CD4-positive, alpha-beta memory T cell (primary cell): ENCODE measurements at regions of chr10 and their contacts with region 1.

Region 1: DNA sequence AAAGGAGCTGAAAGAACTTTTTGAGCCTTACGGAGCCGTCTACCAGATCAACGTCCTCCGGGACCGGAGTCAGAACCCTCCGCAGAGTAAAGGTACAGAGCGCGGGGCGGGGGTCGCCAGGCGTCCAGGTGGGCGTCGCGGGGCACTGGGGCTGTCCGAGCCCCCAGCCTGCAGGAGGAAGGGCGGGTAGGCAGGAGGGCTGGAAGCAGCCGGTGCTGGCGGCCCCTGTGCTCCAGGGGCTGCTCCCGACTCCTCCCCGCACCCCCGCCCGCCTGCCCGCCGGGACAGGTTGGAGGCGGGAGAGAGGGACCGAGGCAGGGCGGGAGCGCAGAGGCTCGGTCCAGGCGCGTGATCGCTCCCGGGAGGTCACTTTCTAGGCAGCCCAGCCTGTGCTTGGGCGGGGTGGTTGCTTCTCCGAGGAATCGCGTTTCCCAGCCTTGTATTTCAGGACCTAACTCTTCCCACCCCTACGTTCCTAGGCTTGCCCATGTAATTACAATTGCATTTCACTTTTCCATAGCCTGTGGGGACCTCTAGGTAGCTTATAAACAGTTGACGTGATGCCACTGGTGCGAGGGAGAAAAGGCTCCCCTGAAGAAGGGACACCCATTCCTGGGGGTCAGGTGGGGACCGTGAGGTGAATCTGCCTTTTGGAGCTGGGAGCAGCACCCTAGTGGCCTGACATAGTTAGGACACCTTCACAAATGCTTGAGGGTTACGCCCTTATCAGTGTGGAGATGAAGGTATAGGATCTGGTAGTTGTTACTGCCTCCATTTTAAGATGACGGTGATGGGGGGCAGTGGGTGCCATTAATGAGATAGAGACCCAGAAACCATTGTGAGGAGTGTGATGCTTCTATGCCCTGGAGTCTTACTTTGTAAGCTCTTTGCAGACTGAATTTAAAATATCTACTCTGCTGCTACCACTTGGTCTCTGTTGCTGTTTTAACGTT is 148.2 kb downstream of the CELF2 start:
- DNase-seq: peak; percentile 78 to 91 (median 86)
- H3K4me3 ChIP-seq: peak overlapping the region; percentile 50 to 93
- H3K4me3 Mint-ChIP-seq: peak overlapping the region in 6 of 8 donors; percentile 98 to 100 (median 99)
- H3K27ac ChIP-seq: peak overlapping the region; percentile 96
- H3K27ac Mint-ChIP-seq: peak overlapping the region in 6 of 7 donors; percentile 97 to 99 (median 98)
- H3K4me1 ChIP-seq: peaks cover 65% of the 10 kb centered on the region
- H3K4me1 Mint-ChIP-seq: peaks cover 31 to 43% (median 35%) of the 10 kb centered on the region in 4 donors
- H3K27me3 ChIP-seq: no peaks in the 10 kb centered on the region
- H3K27me3 Mint-ChIP-seq: no peaks in the 10 kb centered on the region

Region 2: GRCh38 chr10:11106621-11107374 is 59.1 kb before region 1 on chr10:
- CTCF ChIA-PET with region 1: interaction called, 39 read pairs
- POLR2A ChIA-PET with region 1: interaction called, 88 read pairs
- intact Hi-C with region 1: no loop called
- DNase-seq: no peak
- H3K4me3 ChIP-seq: no peak overlapping the region
- H3K4me3 Mint-ChIP-seq: no peak overlapping the region
- H3K27ac ChIP-seq: no peak overlapping the region
- H3K27ac Mint-ChIP-seq: peak overlapping the region in 1 of 7 donors; percentile 45
- H3K4me1 ChIP-seq: peaks cover 15% of the 10 kb centered on the region
- H3K4me1 Mint-ChIP-seq: peaks cover 16 to 23% (median 17%) of the 10 kb centered on the region in 4 donors
- H3K27me3 ChIP-seq: no peaks in the 10 kb centered on the region
- H3K27me3 Mint-ChIP-seq: no peaks in the 10 kb centered on the region

Region 3: GRCh38 chr10:11118686-11119085 is 47.2 kb before region 1 on chr10:
- CTCF ChIA-PET with region 1: interaction called, 39 read pairs
- POLR2A ChIA-PET with region 1: interaction called, 88 read pairs
- intact Hi-C with region 1: loop called (anchors 1 kb)
- DNase-seq: no peak
- H3K4me3 ChIP-seq: no peak overlapping the region
- H3K4me3 Mint-ChIP-seq: no peak overlapping the region
- H3K27ac ChIP-seq: no peak overlapping the region
- H3K27ac Mint-ChIP-seq: no peak overlapping the region
- H3K4me1 ChIP-seq: peaks cover 5% of the 10 kb centered on the region
- H3K4me1 Mint-ChIP-seq: peaks cover 13 to 27% (median 16%) of the 10 kb centered on the region in 4 donors
- H3K27me3 ChIP-seq: no peaks in the 10 kb centered on the region
- H3K27me3 Mint-ChIP-seq: no peaks in the 10 kb centered on the region

Region 4: DNA sequence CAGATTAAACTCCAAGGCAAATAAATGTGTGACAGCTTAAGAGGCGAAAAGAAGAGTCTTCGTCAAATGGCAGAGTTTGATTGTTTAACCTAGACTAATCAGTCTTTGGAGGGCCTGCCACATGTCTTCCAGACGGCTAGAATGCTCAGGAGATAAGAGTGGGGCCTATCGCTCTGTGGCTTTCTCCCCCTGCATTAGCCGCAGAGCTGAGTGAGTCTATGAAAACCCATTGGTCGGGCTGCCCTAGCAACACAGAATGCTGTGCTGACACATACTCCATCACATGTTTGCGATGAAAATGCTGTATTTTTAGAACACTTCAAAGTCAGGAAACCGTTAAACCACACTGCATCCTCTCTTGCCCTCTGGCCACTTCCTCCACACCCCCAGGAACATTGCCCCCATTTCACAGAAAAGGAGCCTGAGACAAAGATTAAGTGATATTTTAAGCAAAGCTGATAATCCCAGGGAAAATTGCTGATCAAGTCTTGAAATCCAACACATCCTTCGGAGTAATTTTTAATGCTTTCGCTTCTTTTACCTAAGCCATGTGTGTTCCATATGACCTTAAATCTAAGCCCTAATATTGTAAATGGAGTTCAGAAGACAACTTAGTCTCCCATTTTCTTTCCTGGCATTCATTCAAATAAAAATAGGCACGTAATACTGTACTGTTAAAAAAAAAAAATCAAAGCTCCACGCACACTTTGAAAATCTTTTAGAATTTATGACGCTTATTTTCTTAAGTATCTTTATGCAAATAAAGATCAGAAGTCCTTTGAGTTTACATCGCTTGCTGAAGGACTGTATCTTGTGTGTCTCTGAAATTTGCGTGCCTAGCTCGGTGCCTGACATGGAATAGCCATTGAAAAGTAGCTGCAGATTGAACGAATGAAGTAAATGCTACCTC is 13.0 kb after region 1 on chr10:
- CTCF ChIA-PET with region 1: interaction called, 101 read pairs
- POLR2A ChIA-PET with region 1: interaction called, 478 read pairs
- intact Hi-C with region 1: loop called (anchors 1 kb)
- DNase-seq: peak; percentile 87 to 98 (median 89)
- H3K4me3 ChIP-seq: peak overlapping the region; percentile 13 to 20
- H3K4me3 Mint-ChIP-seq: peak overlapping the region in 2 of 8 donors; percentile 76 to 80
- H3K27ac ChIP-seq: peak overlapping the region; percentile 96
- H3K27ac Mint-ChIP-seq: peak overlapping the region in 3 of 7 donors; percentile 97 to 100 (median 98)
- H3K4me1 ChIP-seq: peaks cover 100% of the 10 kb centered on the region
- H3K4me1 Mint-ChIP-seq: peaks cover 30 to 90% (median 60%) of the 10 kb centered on the region in 4 donors
- H3K27me3 ChIP-seq: no peaks in the 10 kb centered on the region
- H3K27me3 Mint-ChIP-seq: no peaks in the 10 kb centered on the region

Region 5: GRCh38 chr10:11225935-11226334 is 60.1 kb after region 1 on chr10:
- CTCF ChIA-PET with region 1: interaction called, 9 read pairs
- POLR2A ChIA-PET with region 1: interaction called, 119 read pairs
- intact Hi-C with region 1: loop called (anchors 2 kb)
- DNase-seq: peak; percentile 46 to 86 (median 50)
- H3K4me3 ChIP-seq: peak overlapping the region in 1 of 2 donors; percentile 36
- H3K4me3 Mint-ChIP-seq: peak overlapping the region in 7 of 8 donors; percentile 64 to 84 (median 75)
- H3K27ac ChIP-seq: peak overlapping the region; percentile 58
- H3K27ac Mint-ChIP-seq: peak overlapping the region; percentile 90 to 98 (median 94)
- H3K4me1 ChIP-seq: peaks cover 96% of the 10 kb centered on the region
- H3K4me1 Mint-ChIP-seq: peaks cover 81 to 99% (median 93%) of the 10 kb centered on the region in 4 donors
- H3K27me3 ChIP-seq: no peaks in the 10 kb centered on the region
- H3K27me3 Mint-ChIP-seq: no peaks in the 10 kb centered on the region

Region 6: GRCh38 chr10:11270135-11270857 is 104.4 kb after region 1 on chr10:
- CTCF ChIA-PET with region 1: interaction called, 8 read pairs
- POLR2A ChIA-PET with region 1: interaction called, 10 read pairs
- intact Hi-C with region 1: loop called (anchors 5 kb)
- DNase-seq: peak; percentile 55 to 66 (median 65)
- H3K4me3 ChIP-seq: no peak overlapping the region
- H3K4me3 Mint-ChIP-seq: peak overlapping the region; percentile 2 to 44 (median 11)
- H3K27ac ChIP-seq: no peak overlapping the region
- H3K27ac Mint-ChIP-seq: peak overlapping the region; percentile 48 to 89 (median 82)
- H3K4me1 ChIP-seq: peaks cover 41% of the 10 kb centered on the region
- H3K4me1 Mint-ChIP-seq: peaks cover 45 to 84% (median 65%) of the 10 kb centered on the region in 4 donors
- H3K27me3 ChIP-seq: no peaks in the 10 kb centered on the region
- H3K27me3 Mint-ChIP-seq: no peaks in the 10 kb centered on the region

Region 7: GRCh38 chr10:11303466-11304170 is 137.8 kb after region 1 on chr10:
- CTCF ChIA-PET with region 1: no interaction called
- POLR2A ChIA-PET with region 1: no interaction called
- intact Hi-C with region 1: no loop called
- DNase-seq: no peak
- H3K4me3 ChIP-seq: no peak overlapping the region
- H3K4me3 Mint-ChIP-seq: no peak overlapping the region
- H3K27ac ChIP-seq: no peak overlapping the region
- H3K27ac Mint-ChIP-seq: peak overlapping the region in 2 of 7 donors; percentile 31 to 64
- H3K4me1 ChIP-seq: no peaks in the 10 kb centered on the region
- H3K4me1 Mint-ChIP-seq: peaks cover 9 to 40% (median 22%) of the 10 kb centered on the region in 4 donors
- H3K27me3 ChIP-seq: no peaks in the 10 kb centered on the region
- H3K27me3 Mint-ChIP-seq: no peaks in the 10 kb centered on the region